ENCODE measurements at regions of chr7 and their contacts with region 1.

Region 1: GRCh38 chr7:107890962-107891635 is at the start of gene DLD:
- DNase-seq: peak; percentile 90
- H3K4me3 ChIP-seq: peak within 1 kb of the TSS; percentile 63 to 80
- H3K27ac ChIP-seq: peak within 1 kb of the TSS; percentile 90 to 91
- H3K4me1 ChIP-seq: peaks cover 6% of the 10 kb centered on the region
- H3K27me3 ChIP-seq: no peaks in the 10 kb centered on the region
- CTCF ChIP-seq: peak in 2 of 4 experiments; percentile 32 to 38
- POLR2A ChIP-seq: peak; percentile 82
- total RNA-seq, gene DLD: 77.4 to 84.1 TPM

Region 2: DNA sequence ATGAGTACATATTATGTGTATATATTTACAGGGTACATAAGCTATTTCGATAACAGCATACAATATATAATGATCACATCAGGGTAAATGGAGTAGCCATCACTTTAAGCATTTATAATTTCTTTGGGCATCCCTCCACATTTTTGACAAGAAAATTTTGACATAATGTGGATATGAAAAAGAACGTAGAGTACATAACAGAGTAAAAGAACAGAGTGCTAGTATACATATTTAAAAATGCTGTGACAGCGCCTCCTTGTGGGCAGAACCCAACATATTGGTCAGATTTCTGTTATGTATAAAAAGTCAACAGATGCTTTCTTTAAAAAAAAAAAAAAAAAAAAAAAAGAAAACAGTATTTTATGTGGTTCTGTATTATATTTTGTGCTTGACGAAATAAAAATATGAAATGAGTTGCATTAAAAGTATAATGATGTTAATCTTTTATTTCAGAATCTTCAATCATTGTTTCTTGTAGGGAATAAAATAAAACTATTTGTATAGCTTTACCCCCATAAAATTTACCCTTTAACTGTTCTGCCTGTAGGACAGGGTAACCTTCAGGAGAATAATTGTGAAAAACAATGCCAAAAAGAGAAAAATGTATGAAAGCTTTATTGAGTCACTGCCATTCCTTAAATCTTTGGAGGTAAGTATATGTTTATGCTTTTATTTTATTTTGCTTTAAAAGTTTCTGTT is 740.6 kb before region 1 on chr7:
- intact Hi-C with region 1: no loop called
- DNase-seq: peak; percentile 60
- H3K4me3 ChIP-seq: no peak overlapping the region
- H3K27ac ChIP-seq: no peak overlapping the region
- H3K4me1 ChIP-seq: no peaks in the 10 kb centered on the region
- H3K27me3 ChIP-seq: no peaks in the 10 kb centered on the region
- CTCF ChIP-seq: peak; percentile 36 to 78 (median 70)
- POLR2A ChIP-seq: no peak

Region 3: GRCh38 chr7:107338080-107338479 is 553.0 kb before region 1 on chr7:
- intact Hi-C with region 1: no loop called
- DNase-seq: no peak
- H3K4me3 ChIP-seq: no peak overlapping the region
- H3K27ac ChIP-seq: no peak overlapping the region
- H3K4me1 ChIP-seq: no peaks in the 10 kb centered on the region
- H3K27me3 ChIP-seq: no peaks in the 10 kb centered on the region
- CTCF ChIP-seq: no peak
- POLR2A ChIP-seq: no peak

Region 4: GRCh38 chr7:108002726-108003598 is 111.9 kb after region 1 on chr7 and contains the start of gene LAMB1:
- intact Hi-C with region 1: loop called (anchors 5 kb)
- DNase-seq: peak; percentile 33
- H3K4me3 ChIP-seq: peak within 1 kb of the TSS; percentile 46 to 48
- H3K27ac ChIP-seq: peak within 1 kb of the TSS; percentile 52 to 57
- H3K4me1 ChIP-seq: peaks cover 4% of the 10 kb centered on the region
- H3K27me3 ChIP-seq: peaks cover 3% of the 10 kb centered on the region
- CTCF ChIP-seq: no peak
- POLR2A ChIP-seq: peak; percentile 48
- total RNA-seq, gene LAMB1: 15.5 to 64.1 TPM

Measured in prostate gland (tissue), 2 donors.